ENCODE measurements at regions of chr17 and their contacts with region 1.

Region 1: DNA sequence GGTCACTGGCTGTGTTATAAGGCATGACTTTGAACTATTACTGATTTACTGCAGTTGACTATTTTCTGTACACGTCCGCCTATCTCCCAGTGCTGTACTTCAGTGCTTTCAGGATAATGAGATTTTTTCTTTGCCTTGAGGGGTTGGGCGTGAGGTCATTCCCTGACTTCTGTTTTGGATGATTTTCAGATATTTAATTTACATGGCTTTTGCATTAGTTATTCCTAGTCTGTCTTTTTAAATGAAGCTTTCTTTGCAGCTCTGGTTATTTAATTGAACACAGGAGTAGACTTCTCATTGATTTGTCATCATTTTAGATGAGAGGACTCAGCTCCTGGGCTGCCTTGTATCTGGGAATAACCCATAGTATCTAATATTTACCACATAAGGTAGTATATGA is 23.7 kb downstream of the WIPF2 start:
- DNase-seq: no peak
- H3K4me3 Mint-ChIP-seq: no peak overlapping the region
- H3K27ac Mint-ChIP-seq: no peak overlapping the region
- H3K4me1 Mint-ChIP-seq: peaks cover 32% of the 10 kb centered on the region
- H3K27me3 Mint-ChIP-seq: no peaks in the 10 kb centered on the region
- CTCF ChIP-seq: no peak

Region 2: DNA sequence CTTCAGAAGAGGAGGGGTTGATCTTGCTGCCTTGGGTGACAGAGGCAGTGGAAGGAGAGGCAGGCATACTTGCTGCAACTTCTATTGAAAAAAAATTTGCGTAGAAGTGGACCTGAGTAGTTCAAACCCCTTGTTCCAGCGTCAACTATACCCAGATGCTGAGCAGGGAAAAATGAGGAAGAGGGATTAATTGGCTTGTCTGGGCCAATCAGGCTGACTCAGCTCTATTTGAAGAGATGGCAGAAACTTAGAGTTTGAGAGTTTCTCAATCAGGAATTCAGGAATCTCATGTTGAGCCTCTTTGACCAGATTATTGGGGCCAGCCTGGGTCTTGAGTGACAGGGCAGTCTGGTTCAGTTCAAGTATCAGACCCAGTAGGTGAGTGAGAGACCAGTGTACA is 84.8 kb before region 1 on chr17:
- CTCF ChIA-PET with region 1: interaction called, 10 read pairs
- intact Hi-C with region 1: no loop called
- DNase-seq: no peak
- H3K4me3 Mint-ChIP-seq: no peak overlapping the region
- H3K27ac Mint-ChIP-seq: no peak overlapping the region
- H3K4me1 Mint-ChIP-seq: no peaks in the 10 kb centered on the region
- H3K27me3 Mint-ChIP-seq: no peaks in the 10 kb centered on the region
- CTCF ChIP-seq: no peak

Region 3: GRCh38 chr17:40230670-40231069 is 12.1 kb before region 1 on chr17:
- CTCF ChIA-PET with region 1: interaction called, 15 read pairs
- intact Hi-C with region 1: no loop called
- DNase-seq: no peak
- H3K4me3 Mint-ChIP-seq: no peak overlapping the region
- H3K27ac Mint-ChIP-seq: no peak overlapping the region
- H3K4me1 Mint-ChIP-seq: no peaks in the 10 kb centered on the region
- H3K27me3 Mint-ChIP-seq: no peaks in the 10 kb centered on the region
- CTCF ChIP-seq: no peak

Region 4: DNA sequence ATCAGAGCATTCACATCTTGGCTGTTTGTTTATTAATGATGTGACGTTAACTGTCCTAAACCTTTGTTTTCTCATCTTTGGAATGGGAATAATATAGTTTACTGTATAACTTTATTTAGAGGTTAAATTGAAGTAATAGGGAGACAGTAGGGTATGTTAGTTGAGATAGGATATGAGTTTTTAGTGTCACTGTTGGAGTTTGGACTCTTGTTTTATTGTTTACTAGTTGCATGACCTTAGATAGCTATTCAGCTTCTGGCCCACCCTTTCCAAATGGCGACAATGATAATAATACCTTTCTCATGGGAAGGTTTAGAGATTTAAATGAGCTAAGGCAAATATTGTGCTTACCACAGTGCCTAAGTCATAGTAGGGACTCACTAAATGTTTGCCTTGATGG is 16.7 kb after region 1 on chr17:
- CTCF ChIA-PET with region 1: interaction called, 12 read pairs
- intact Hi-C with region 1: no loop called
- DNase-seq: no peak
- H3K4me3 Mint-ChIP-seq: no peak overlapping the region
- H3K27ac Mint-ChIP-seq: no peak overlapping the region
- H3K4me1 Mint-ChIP-seq: peaks cover 1% of the 10 kb centered on the region
- H3K27me3 Mint-ChIP-seq: no peaks in the 10 kb centered on the region
- CTCF ChIP-seq: no peak

Measured in Calu3 (cell line).